Cardiac septum (tissue), 1 donor: ENCODE measurements at regions of chr9 and their contacts with region 1.

Region 1: DNA sequence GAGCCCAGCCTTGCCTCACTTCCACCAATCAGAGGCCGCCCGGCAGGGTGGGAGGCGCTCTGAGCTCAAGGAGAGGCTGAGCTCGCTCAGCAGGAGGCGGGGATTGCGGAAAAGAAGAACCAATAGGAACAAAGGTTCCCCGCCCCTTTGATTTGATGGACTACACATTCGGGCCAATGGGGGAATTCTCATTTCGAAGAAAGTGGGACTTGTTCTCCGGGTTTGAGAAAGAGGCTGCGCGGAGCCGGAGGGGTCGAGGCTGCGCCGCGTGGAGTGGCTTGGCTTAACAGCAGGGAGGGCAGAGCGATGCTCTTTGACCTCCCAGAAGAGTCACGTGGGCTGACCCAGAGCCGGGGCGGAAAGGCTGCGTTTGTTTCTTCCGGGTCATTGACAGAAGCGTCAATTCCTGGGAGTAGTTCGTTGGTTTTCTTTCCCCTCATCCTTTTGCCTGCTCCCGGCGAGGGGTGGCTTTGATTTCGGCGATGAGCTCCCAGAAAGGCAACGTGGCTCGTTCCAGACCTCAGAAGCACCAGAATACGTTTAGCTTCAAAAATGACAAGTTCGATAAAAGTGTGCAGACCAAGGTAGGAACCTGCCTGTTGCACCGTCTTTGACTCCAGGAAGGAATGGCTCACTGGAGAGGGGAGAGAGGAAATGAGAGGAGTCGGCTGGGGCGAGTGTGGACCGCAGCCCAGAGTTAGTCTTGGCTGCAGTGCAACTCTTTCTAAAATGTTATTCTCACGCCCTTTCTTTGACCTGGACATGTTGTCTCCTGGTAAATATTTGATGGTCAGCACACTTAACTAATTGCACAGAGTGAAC is at the start of gene C9orf85:
- DNase-seq: no peak
- total RNA-seq, gene C9orf85: 6.2 TPM

Region 2: DNA sequence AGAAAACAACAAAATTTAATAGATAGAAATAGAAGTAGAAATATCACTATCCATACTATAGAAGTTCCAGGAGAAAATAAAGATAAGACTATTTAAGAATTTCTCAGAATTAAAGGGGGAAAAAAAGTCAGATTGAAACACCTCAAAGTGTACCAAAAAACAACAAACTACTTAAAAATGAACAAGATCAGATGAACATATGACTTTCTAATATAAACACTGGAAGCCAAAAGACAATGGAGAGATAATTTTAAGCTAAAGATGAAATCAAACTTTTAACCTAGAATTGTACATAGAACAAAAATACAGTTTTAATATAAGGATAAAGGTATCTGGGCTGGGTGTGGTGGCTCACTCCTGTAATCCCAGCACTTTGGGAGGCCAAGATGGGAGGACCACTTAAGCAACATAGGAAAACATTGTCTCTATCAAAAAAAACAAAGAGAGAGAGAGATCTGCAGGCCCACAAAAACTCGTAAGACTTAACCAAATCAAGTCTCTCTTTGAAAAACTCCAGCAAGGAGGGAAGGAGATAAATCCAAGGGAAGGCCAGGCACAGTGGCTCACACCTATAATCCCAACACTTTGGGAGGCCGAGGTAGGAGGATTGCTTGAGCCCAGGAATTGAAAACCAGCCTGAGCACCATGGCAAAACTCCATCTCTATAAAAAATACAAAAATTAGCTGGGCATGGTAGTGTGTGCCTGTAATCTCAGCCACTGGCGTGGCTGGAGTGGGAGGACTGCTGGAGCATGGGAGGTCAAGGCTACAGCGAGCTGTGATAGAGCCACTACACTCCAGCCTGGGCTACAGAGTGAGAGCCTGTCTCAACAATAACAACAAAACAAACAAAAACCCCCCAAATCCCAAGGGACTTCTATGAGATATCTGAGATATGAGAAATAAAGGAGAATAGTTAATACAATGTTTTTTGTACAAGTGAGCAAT is 32.9 kb before region 1 on chr9:
- intact Hi-C with region 1: no loop called
- DNase-seq: no peak

Region 3: DNA sequence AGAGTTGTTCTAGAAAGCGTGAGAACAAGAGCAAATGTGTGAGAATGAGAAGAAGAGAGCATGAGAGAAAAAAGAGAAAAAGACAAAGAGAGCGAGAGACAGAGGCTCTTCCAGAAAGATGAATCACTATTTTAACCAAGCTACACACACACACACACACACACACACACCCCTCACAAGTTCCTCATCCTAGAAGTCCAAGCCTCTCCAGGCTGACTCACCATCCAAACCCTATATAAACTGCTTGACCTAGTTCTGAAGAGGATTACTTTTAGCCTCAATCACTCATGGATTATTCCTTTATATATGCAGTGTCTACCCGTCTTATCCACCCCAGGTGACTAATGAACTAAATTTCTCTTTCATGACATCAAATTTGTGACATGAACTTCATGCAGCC is 111.4 kb after region 1 on chr9:
- intact Hi-C with region 1: loop called (anchors 10 kb)
- DNase-seq: no peak